ENCODE measurements at regions of chr22 and their contacts with region 1.

Region 1: DNA sequence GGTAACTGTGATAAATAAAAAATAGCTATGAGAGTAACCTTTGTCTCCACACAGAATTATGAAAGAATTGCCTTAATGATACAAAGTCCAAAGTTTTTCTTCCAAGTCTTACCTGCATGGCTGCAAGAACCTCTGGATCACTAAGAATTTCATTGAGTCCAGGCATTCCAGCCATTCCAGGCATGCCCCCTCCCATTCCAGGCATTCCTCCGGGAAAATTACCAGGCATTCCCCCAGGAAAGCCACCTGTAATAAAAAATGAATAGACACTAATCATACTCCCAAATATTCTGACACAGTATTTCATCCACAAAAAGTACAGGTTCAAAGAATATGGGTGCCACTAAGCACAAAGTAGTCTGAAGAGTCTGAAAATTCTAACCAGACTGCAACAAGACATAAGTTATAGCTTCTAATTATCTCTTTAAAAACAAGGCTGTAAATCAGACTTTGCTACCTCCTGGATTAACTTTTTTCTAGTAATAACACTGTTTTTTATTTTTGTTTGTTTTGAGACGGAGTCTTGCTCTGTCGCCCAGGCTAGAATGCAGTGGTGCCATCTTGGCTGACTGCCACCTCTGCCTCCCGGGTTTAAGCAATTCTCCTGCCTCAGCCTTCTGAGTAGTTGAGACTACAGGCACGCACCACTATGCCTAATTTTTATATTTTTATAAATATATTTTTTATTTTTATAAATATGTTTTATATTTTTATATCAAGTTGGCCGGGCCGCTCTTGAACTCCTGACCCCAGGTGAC is 8.0 kb upstream of the SLC25A17 start:
- ATAC-seq: no peak
- H3K4me3 ChIP-seq: no peak overlapping the region
- H3K27ac ChIP-seq: no peak overlapping the region
- H3K4me1 ChIP-seq: no peaks in the 10 kb centered on the region

Region 2: DNA sequence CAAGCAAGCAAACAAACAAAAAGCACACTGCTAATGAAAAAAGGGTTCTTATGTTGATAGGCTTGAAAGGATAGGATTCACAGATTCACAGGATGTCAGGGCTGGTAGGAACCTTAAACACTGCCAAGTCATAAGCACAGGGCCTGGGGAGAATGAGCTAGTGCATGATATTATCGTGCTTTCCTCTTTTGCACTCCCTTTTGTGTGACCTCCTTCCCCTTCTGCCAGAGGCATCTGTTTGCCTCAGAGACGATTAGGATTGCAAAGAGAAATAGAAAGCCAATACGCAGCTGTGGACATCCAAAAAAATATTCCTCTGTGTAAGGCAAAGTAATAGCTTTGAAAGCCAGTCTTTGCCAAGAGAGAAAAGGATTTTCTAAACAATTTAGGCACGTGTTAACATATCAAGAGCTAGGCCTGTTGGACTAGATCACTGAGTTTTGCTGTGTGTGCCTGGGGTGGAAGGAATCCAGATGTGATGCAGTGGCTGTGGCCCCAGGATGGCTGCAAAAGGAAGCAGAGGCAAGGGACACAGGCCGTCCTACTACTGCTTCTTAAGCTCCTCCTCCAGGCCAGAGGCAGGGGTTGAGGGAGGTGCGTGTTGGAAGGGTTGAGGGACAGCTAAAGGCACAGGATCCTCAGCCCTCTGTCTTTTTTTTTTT is 117.3 kb before region 1 on chr22:
- in situ Hi-C with region 1: no loop called
- ATAC-seq: peak in 3 of 8 experiments; percentile 27 to 64 (median 64)
- H3K4me3 ChIP-seq: no peak overlapping the region
- H3K27ac ChIP-seq: peak overlapping the region in 1 of 2 donors; percentile 3
- H3K4me1 ChIP-seq: peaks cover 13 to 22% of the 10 kb centered on the region in 2 donors

Region 3: GRCh38 chr22:41146573-41146972 is 319.4 kb after region 1 on chr22:
- in situ Hi-C with region 1: loop called in 2 of 9 experiments (anchors 25 kb)
- ATAC-seq: no peak
- H3K4me3 ChIP-seq: no peak overlapping the region
- H3K27ac ChIP-seq: no peak overlapping the region
- H3K4me1 ChIP-seq: no peaks in the 10 kb centered on the region

Region 4: GRCh38 chr22:41157083-41157482 is 329.9 kb after region 1 on chr22:
- in situ Hi-C with region 1: loop called in 1 of 9 experiments (anchors 25 kb)
- ATAC-seq: no peak
- H3K4me3 ChIP-seq: no peak overlapping the region
- H3K27ac ChIP-seq: no peak overlapping the region
- H3K4me1 ChIP-seq: no peaks in the 10 kb centered on the region

Measured in motor neuron (in vitro differentiated cells).